ENCODE measurements at regions of chr14 and their contacts with region 1.

Region 1: GRCh38 chr14:35814371-35815005 is 5.4 kb upstream of the RALGAPA1 start:
- DNase-seq: peak; percentile 72
- H3K4me3 ChIP-seq: no peak overlapping the region
- H3K27ac ChIP-seq: no peak overlapping the region
- H3K4me1 ChIP-seq: no peaks in the 10 kb centered on the region
- CTCF ChIP-seq: peak; percentile 93

Region 2: GRCh38 chr14:35438910-35439713 is 375.4 kb before region 1 on chr14:
- CTCF ChIA-PET with region 1: no interaction called
- POLR2A ChIA-PET with region 1: no interaction called
- intact Hi-C with region 1: loop called (anchors 5 kb)
- DNase-seq: peak; percentile 61
- H3K4me3 ChIP-seq: no peak overlapping the region
- H3K27ac ChIP-seq: no peak overlapping the region
- H3K4me1 ChIP-seq: peaks cover 8% of the 10 kb centered on the region
- CTCF ChIP-seq: peak; percentile 77

Region 3: DNA sequence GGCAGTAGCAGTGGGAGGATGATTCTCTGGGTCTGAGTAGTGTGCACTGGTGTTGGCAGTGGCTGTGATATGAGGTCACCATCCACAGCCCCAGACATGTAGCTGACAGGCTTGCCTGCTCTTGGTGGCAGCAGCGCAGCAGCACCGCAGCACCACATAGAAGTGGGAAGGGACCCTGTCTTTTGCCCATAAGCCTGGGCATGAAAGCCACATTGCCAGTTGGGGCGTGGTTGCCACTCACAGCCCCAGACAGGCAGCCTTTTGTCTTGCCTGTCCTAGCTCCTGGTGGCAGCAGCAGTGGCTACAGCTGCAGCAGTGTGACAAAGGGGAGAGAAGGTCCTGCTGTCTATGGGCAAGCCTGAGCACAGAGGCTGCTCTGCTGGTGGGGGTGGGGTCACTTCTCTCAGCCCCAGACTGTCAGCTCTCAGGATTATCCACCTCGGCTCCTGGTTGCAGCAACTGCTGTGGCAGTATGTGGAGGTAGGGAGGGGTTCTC is 83.2 kb after region 1 on chr14:
- CTCF ChIA-PET with region 1: no interaction called
- POLR2A ChIA-PET with region 1: no interaction called
- intact Hi-C with region 1: no loop called
- DNase-seq: no peak
- H3K4me3 ChIP-seq: no peak overlapping the region
- H3K27ac ChIP-seq: no peak overlapping the region
- H3K4me1 ChIP-seq: no peaks in the 10 kb centered on the region
- CTCF ChIP-seq: no peak

Measured in OCI-LY7 (cell line).